Right cardiac atrium (tissue), 5 donors: ENCODE measurements at regions of chr2 and their contacts with region 1.

Region 1: GRCh38 chr2:42906557-42907411 is 114.4 kb upstream of the HAAO start:
- DNase-seq: peak; percentile 77 to 94 (median 93)
- ATAC-seq: peak; percentile 72 to 88
- H3K4me3 ChIP-seq: no peak overlapping the region
- H3K27ac ChIP-seq: peak overlapping the region; percentile 74
- H3K4me1 ChIP-seq: peaks cover 31% of the 10 kb centered on the region
- H3K27me3 ChIP-seq: no peaks in the 10 kb centered on the region

Region 2: GRCh38 chr2:42865884-42866881 is 40.6 kb before region 1 on chr2:
- intact Hi-C with region 1: loop called in 2 of 4 experiments (anchors 5 kb)
- DNase-seq: peak; percentile 71 to 89 (median 85)
- ATAC-seq: peak; percentile 84 to 85
- H3K4me3 ChIP-seq: no peak overlapping the region
- H3K27ac ChIP-seq: peak overlapping the region; percentile 93
- H3K4me1 ChIP-seq: peaks cover 5% of the 10 kb centered on the region
- H3K27me3 ChIP-seq: no peaks in the 10 kb centered on the region

Region 3: GRCh38 chr2:42987112-42987922 is 80.5 kb after region 1 on chr2:
- intact Hi-C with region 1: no loop called
- DNase-seq: no peak
- ATAC-seq: no peak
- H3K4me3 ChIP-seq: no peak overlapping the region
- H3K27ac ChIP-seq: no peak overlapping the region
- H3K4me1 ChIP-seq: peaks cover 2% of the 10 kb centered on the region
- H3K27me3 ChIP-seq: no peaks in the 10 kb centered on the region